Caco-2 (cell line): ENCODE measurements at regions of chr14 and their contacts with region 1.

Region 1: GRCh38 chr14:85471727-85472126 is 58.2 kb upstream of the FLRT2 start:
- DNase-seq: peak; percentile 84 to 93
- H3K4me3 ChIP-seq: no peak overlapping the region
- H3K4me3 Mint-ChIP-seq: peak overlapping the region; percentile 6
- H3K27ac Mint-ChIP-seq: no peak overlapping the region
- H3K4me1 ChIP-seq: peaks cover 30% of the 10 kb centered on the region
- H3K4me1 Mint-ChIP-seq: peaks cover 9% of the 10 kb centered on the region
- H3K27me3 ChIP-seq: no peaks in the 10 kb centered on the region
- H3K27me3 Mint-ChIP-seq: no peaks in the 10 kb centered on the region
- CTCF ChIP-seq: no peak

Region 2: GRCh38 chr14:85296456-85297210 is 175.1 kb before region 1 on chr14:
- CTCF ChIA-PET with region 1: no interaction called
- POLR2A ChIA-PET with region 1: no interaction called
- intact Hi-C with region 1: loop called (anchors 5 kb)
- DNase-seq: peak; percentile 24 to 49
- H3K4me3 ChIP-seq: no peak overlapping the region
- H3K4me3 Mint-ChIP-seq: no peak overlapping the region
- H3K27ac Mint-ChIP-seq: no peak overlapping the region
- H3K4me1 ChIP-seq: no peaks in the 10 kb centered on the region
- H3K4me1 Mint-ChIP-seq: peaks cover 12% of the 10 kb centered on the region
- H3K27me3 ChIP-seq: no peaks in the 10 kb centered on the region
- H3K27me3 Mint-ChIP-seq: peaks cover 2% of the 10 kb centered on the region
- CTCF ChIP-seq: no peak

Region 3: DNA sequence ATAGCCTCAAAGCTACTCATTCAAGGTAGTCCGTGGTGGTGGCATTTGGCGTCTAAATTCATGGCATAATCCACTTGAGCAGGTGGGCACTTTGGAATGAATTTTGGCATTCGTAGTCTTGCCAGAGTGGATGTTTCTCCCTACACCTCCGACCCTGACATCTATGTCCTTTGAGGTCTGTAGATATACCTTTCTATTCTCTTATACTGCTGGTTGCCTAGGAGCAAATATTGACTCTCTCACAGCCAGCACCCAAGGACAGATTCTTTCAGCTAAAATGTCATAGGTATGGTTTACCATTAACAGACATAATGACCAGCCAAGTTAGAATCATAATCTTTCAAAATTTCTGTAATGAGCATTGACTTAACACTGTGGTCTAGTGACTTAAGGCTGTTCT is 10.8 kb after region 1 on chr14:
- CTCF ChIA-PET with region 1: no interaction called
- POLR2A ChIA-PET with region 1: no interaction called
- intact Hi-C with region 1: loop called (anchors 1 kb)
- DNase-seq: peak; percentile 53
- H3K4me3 ChIP-seq: no peak overlapping the region
- H3K4me3 Mint-ChIP-seq: peak overlapping the region; percentile 42
- H3K27ac Mint-ChIP-seq: peak overlapping the region; percentile 75
- H3K4me1 ChIP-seq: peaks cover 36% of the 10 kb centered on the region
- H3K4me1 Mint-ChIP-seq: peaks cover 37% of the 10 kb centered on the region
- H3K27me3 ChIP-seq: no peaks in the 10 kb centered on the region
- H3K27me3 Mint-ChIP-seq: no peaks in the 10 kb centered on the region
- CTCF ChIP-seq: no peak